Right cardiac atrium (tissue), 5 donors: ENCODE measurements at regions of chr9 and their contacts with region 1.

Region 1: GRCh38 chr9:101530077-101530711 is 3.5 kb upstream of the RNF20 start:
- DNase-seq: peak; percentile 42 to 70 (median 68)
- ATAC-seq: peak; percentile 46 to 59
- H3K4me3 ChIP-seq: no peak overlapping the region
- H3K27ac ChIP-seq: no peak overlapping the region
- H3K4me1 ChIP-seq: no peaks in the 10 kb centered on the region
- H3K27me3 ChIP-seq: no peaks in the 10 kb centered on the region

Region 2: DNA sequence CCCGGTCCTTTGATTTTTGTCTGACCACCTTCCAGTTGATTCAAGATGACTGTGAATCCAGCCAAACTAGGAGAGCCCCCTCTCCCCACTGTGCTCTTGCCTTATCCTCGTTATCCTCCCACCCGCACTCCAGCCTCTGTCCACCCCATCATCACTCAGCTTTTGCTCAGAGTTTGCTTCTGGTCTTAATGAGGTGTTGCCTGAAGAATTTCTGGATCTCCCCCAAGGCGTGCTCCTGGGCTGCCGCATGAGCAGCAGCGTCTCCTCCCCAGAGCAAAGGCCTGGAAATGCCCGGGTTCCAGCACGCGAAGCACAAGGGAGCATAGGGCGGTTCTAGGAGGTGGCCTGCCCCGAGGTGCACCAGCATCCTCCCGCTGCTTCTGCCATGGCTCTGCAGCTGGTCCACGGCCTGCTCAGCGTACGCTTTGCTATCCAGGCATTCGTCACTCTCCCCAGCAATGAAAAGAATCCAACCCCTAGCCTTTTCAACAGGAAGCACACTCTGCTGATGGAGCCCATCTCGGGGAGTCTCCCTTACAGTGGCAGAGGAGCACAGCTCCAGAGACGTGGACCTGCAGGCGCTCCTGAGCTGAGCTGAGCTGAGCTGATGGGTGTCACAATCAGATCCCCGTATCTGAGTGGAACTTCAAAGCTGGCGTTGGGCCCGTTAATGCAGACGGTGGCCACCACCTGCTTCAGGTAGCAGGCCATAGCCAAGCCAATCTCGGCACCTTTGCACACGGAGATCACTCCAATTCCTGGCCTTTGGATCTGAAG is 196.1 kb before region 1 on chr9:
- intact Hi-C with region 1: no loop called
- DNase-seq: no peak
- ATAC-seq: no peak
- H3K4me3 ChIP-seq: no peak overlapping the region
- H3K27ac ChIP-seq: no peak overlapping the region
- H3K4me1 ChIP-seq: no peaks in the 10 kb centered on the region
- H3K27me3 ChIP-seq: no peaks in the 10 kb centered on the region

Region 3: DNA sequence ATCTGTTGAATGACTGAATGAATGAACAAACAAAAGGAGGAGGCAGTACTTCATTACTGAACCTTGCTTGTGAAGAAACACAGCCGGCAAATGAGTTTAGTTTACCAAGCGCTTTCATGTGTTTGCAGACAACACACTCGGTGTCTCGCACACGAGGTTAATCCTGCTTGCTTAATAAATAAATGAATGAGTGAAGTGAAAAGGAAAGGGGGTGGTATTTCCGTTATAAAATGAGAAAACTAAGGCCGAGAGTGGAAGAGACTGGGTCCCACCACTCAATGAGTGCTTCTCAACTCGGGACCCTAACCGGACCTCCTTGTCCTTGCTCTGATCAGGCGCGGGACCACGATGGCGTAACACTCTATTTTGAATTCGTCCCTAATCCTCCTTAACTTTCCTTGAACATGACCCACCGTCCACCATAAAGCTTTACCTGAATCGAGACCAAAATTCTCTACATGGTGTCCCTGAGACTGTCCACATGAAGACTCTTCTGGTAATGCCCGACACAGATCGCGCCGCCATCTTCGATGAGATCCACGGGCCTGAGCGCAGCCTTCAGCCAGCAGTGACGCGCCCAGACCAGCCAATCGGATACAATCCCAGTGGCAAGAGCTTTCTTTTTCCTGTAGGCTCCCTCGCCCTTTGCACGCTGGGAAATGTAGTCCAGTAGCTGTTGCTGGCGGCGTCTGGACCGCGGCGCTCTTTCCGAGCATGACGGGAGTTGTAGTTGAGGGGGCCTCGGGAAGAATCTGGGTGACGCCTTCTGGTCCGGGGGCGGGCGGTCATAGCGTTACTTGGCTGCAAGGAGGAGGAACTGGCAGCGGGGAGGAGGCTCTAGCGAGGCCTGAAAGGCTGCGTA is 131.9 kb before region 1 on chr9 and contains the starts of genes MRPL50 and ZNF189:
- intact Hi-C with region 1: loop called in 2 of 4 experiments (anchors 10 kb)
- DNase-seq: peak; percentile 98 to 99 (median 99)
- ATAC-seq: peak; percentile 98 to 99
- H3K4me3 ChIP-seq: peak within 1 kb of the TSS; percentile 95
- H3K27ac ChIP-seq: peak within 1 kb of the TSS; percentile 89
- H3K4me1 ChIP-seq: peaks cover 2% of the 10 kb centered on the region
- H3K27me3 ChIP-seq: no peaks in the 10 kb centered on the region
- total RNA-seq, gene MRPL50: 16.0 to 19.2 (median 18.2) TPM
- total RNA-seq, gene ZNF189: 25.5 to 38.3 (median 32.3) TPM

Region 4: GRCh38 chr9:101458955-101459631 is 71.1 kb before region 1 on chr9:
- intact Hi-C with region 1: loop called in 3 of 4 experiments (anchors 2 to 5 kb)
- DNase-seq: no peak
- ATAC-seq: peak; percentile 87 to 88
- H3K4me3 ChIP-seq: no peak overlapping the region
- H3K27ac ChIP-seq: no peak overlapping the region
- H3K4me1 ChIP-seq: peaks cover 2% of the 10 kb centered on the region
- H3K27me3 ChIP-seq: no peaks in the 10 kb centered on the region

Region 5: GRCh38 chr9:101465392-101465791 is 64.8 kb before region 1 on chr9:
- intact Hi-C with region 1: loop called (anchors 2 to 5 kb)
- DNase-seq: peak; percentile 29 to 70 (median 44)
- ATAC-seq: peak; percentile 78 to 88
- H3K4me3 ChIP-seq: no peak overlapping the region
- H3K27ac ChIP-seq: no peak overlapping the region
- H3K4me1 ChIP-seq: no peaks in the 10 kb centered on the region
- H3K27me3 ChIP-seq: no peaks in the 10 kb centered on the region